GM12878 (cell line): ENCODE measurements at regions of chr1 and their contacts with region 1.

Region 1: DNA sequence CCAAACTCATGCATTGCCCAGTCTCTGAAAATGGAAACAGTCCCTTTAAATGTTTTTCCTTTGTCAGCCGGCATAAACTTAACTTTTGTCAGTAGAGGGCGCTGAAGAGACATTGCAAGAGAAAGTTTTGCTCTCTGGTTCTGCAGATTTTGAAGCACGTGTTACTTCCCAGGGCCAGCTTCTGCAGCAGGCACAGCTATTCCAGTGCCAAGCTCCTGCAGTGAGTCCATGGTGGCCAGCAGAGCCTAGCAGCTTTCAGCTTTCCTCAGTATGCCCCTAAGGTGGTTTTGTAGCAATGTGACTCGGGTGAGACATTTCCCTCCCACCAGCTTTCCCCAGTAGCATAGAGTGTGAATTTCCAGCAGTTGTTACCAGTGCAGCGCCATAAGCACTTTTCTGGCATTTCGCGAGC is 2.6 kb upstream of the IFI44L start:
- DNase-seq: peak; percentile 60
- ATAC-seq: peak; percentile 54
- H3K4me3 ChIP-seq: no peak overlapping the region
- H3K27ac ChIP-seq: peak overlapping the region; percentile 61; the same call in 1 of the 2 replicates
- H3K4me1 ChIP-seq: peaks cover 20% of the 10 kb centered on the region
- H3K27me3 ChIP-seq: no peaks in the 10 kb centered on the region
- CTCF ChIP-seq: peak; percentile 81 to 95 (median 87); a peak in 5 of 6 replicates
- EP300 ChIP-seq: no peak
- POLR2A ChIP-seq: no peak
- RAD21 ChIP-seq: peak; percentile 95

Region 2: DNA sequence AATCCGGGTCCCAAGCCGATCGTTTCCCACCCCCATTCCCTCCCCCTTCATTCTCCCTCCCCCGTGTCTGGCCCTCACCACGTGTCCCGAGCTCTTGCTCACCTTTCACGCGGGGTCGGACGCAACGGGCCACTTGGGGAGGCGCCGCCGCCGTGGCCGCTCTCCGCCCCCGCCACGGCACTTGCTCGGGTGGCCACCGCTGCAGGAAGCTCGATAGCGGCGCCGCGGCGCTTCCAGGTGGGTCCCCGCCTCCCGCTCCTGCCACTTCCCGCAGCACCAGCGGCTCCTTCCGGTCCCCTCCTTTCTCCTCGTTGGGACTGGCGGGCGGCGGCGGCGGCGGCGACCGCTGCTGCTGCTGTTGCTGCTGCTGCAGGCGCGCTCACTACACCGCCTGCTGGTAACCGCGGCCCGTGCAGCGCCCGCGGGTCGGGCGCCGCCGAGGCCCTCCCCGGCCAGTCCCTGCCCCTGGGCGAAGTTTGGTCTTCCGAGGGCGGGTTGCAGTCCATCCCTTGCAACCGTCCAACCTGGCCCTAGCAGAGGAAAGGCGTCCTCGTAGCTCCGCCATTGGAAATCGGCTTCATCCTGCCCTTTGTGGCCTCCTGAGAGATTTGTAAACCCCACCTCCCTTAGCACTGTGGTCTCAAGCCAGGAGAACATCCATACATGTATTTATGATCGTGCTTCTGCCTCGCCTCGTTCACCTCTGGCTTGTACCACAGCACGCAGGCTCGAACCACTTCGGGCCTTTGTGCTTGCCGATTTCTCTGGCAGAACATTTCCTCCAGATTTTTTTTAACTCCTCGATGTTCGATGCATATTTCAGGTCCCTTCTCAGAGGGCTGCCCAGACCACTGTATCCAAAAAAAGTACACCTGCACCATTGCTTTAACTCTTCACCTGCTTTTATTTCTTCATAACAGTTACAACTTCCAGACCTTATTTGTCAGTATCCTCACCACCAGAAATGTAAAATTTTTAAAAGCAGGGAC is 934.2 kb before region 1 on chr1:
- CTCF ChIA-PET with region 1: no interaction called
- POLR2A ChIA-PET with region 1: no interaction called
- RAD21 ChIA-PET with region 1: no interaction called
- SMC1A ChIA-PET with region 1: no interaction called
- in situ Hi-C with region 1: no loop called
- intact Hi-C with region 1: loop called (anchors 5 kb)
- DNase-seq: peak; percentile 45
- ATAC-seq: peak; percentile 84
- H3K4me3 ChIP-seq: peak overlapping the region; percentile 71
- H3K27ac ChIP-seq: peak overlapping the region; percentile 88
- H3K4me1 ChIP-seq: 0 out of 2 replicates have a peak, but pooled peaks cover 3% of the 10 kb centered on the region
- H3K27me3 ChIP-seq: no peaks in the 10 kb centered on the region
- CTCF ChIP-seq: peak; percentile 77 to 84 (median 80); a peak in 5 of 6 replicates
- EP300 ChIP-seq: no peak
- POLR2A ChIP-seq: peak; percentile 89
- RAD21 ChIP-seq: peak; percentile 47

Region 3: GRCh38 chr1:78132174-78132947 is 485.3 kb before region 1 on chr1:
- CTCF ChIA-PET with region 1: interaction called, 13 read pairs
- POLR2A ChIA-PET with region 1: no interaction called
- RAD21 ChIA-PET with region 1: interaction called, 8 read pairs
- SMC1A ChIA-PET with region 1: interaction called, 3 read pairs
- in situ Hi-C with region 1: no loop called
- intact Hi-C with region 1: no loop called
- DNase-seq: no peak
- ATAC-seq: peak; percentile 59
- H3K4me3 ChIP-seq: no peak overlapping the region
- H3K27ac ChIP-seq: no peak overlapping the region
- H3K4me1 ChIP-seq: no peaks in the 10 kb centered on the region; the same call in 1 of the 2 replicates
- H3K27me3 ChIP-seq: no peaks in the 10 kb centered on the region
- CTCF ChIP-seq: no peak
- EP300 ChIP-seq: no peak
- POLR2A ChIP-seq: no peak
- RAD21 ChIP-seq: no peak

Region 4: GRCh38 chr1:78649628-78650027 is 32.0 kb after region 1 on chr1 and contains the start of gene IFI44:
- CTCF ChIA-PET with region 1: interaction called, 8 read pairs
- POLR2A ChIA-PET with region 1: interaction called, 32 read pairs
- RAD21 ChIA-PET with region 1: interaction called, 18 read pairs
- SMC1A ChIA-PET with region 1: interaction called, 22 read pairs
- in situ Hi-C with region 1: no loop called
- intact Hi-C with region 1: loop called (anchors 1 kb)
- DNase-seq: peak; percentile 75
- ATAC-seq: peak; percentile 72
- H3K4me3 ChIP-seq: peak within 1 kb of the TSS; percentile 95
- H3K27ac ChIP-seq: peak within 1 kb of the TSS; percentile 82
- H3K4me1 ChIP-seq: no peaks in the 10 kb centered on the region
- H3K27me3 ChIP-seq: no peaks in the 10 kb centered on the region
- CTCF ChIP-seq: no peak
- EP300 ChIP-seq: no peak
- POLR2A ChIP-seq: peak; percentile 81
- RAD21 ChIP-seq: no peak
- polyA plus RNA-seq, gene IFI44: 75.6 to 125 TPM

Region 5: DNA sequence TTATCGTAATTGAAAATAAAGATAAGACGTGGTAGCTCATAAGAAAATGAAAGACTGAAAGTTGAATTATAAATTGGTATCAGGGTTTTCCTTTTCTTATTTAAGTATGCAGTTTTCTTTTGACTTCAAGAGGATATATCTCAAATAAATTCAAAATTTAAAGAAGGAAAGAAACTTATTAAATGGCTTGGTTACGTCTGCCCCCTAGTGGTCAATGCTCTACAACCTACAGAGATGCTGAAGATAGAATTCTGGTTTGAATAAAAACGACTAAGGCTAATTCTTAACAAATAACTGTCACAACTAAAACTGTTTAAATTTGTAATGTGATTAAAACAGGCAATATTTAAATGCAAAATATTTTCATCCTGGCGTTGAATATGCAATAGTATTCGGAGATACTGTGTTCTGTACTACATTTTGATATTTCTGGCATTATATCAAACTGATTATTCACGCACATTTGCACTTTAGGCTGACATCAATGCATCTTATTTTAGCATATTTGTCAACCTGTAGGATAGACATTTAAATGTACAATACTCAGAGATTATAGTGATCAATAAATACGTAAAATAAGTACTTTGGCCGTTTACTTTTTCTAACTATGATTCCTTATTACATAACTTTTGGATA is 58.8 kb after region 1 on chr1:
- CTCF ChIA-PET with region 1: interaction called, 127 read pairs
- POLR2A ChIA-PET with region 1: interaction called, 3 read pairs
- RAD21 ChIA-PET with region 1: interaction called, 58 read pairs
- SMC1A ChIA-PET with region 1: interaction called, 78 read pairs
- in situ Hi-C with region 1: no loop called
- intact Hi-C with region 1: loop called (anchors 1 kb)
- DNase-seq: no peak
- ATAC-seq: peak; percentile 70
- H3K4me3 ChIP-seq: no peak overlapping the region
- H3K27ac ChIP-seq: no peak overlapping the region
- H3K4me1 ChIP-seq: peaks cover 11% of the 10 kb centered on the region
- H3K27me3 ChIP-seq: no peaks in the 10 kb centered on the region
- CTCF ChIP-seq: peak; percentile 54 to 76 (median 56)
- EP300 ChIP-seq: no peak
- POLR2A ChIP-seq: no peak
- RAD21 ChIP-seq: peak; percentile 86

Region 6: DNA sequence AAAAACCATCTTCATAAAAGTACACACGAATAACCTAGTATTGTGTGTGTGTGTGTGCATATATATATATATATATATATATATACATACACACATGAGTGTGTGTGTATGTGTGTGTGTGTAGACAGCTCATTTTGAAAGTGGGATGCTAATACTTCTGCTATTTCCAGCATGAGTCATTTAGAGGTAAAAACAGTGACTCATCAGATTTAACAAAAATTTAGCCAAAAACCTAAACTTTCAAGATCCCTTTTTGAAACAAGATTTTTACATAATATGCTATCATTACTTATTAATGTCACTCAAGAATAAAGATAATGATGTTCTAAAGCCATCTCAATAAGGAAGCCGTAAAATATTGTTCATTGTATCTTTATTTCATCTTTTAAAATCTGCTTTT is 424.5 kb after region 1 on chr1:
- CTCF ChIA-PET with region 1: no interaction called
- POLR2A ChIA-PET with region 1: no interaction called
- RAD21 ChIA-PET with region 1: no interaction called
- SMC1A ChIA-PET with region 1: no interaction called
- in situ Hi-C with region 1: no loop called
- intact Hi-C with region 1: loop called (anchors 10 kb)
- DNase-seq: peak; percentile 44
- ATAC-seq: peak; percentile 64
- H3K4me3 ChIP-seq: no peak overlapping the region
- H3K27ac ChIP-seq: no peak overlapping the region
- H3K4me1 ChIP-seq: peaks cover 8% of the 10 kb centered on the region; the same call in 1 of the 2 replicates
- H3K27me3 ChIP-seq: no peaks in the 10 kb centered on the region
- CTCF ChIP-seq: no peak
- EP300 ChIP-seq: peak; percentile 58 to 59; a peak in 2 of 4 replicates
- POLR2A ChIP-seq: no peak
- RAD21 ChIP-seq: no peak